ENCODE measurements at regions of chr9 and their contacts with region 1.

Region 1: DNA sequence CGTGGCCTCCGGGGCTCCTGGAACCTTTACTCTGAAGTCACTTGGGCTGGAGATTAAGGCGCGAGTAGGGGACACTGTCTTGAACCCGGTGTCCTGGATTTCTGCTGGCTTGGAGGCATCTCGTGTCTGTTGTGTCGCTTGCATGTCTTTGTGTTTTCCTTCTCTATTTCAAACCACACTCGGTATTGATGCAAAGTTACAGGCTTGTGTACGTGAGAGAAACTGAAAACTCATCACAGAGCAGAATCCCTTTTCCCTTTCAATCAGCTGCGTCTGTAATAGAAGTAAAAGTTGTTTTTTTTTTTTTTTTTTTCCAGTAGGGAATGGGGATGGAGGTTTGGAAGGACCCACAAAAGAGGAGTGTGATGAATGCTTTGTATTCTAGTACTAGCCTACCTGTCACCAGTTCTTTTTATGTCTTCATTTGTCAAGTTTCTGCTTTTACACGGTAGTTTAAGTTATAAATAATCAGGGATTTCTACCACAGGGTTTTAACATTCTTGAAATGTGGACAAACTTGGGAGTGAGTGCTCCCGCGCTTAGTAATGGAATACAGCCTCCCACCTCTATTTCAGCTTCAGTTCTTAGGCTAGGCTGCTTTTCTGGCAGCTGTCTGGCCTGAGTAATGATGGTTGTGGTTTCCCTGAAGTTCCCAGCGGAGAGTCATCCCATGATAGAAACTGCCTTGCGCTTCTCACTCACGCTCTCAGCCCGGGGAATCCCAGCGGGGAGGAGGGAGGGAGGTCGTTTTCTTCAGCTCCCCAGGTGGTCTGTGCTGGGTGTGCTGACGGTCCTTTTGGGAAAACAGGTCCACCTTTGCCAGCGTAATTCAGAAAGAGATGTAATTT is 763 bp downstream of the TJP2 start:
- DNase-seq: no peak
- H3K4me3 Mint-ChIP-seq: peak overlapping the region; percentile 86
- H3K27ac Mint-ChIP-seq: peak overlapping the region; percentile 74
- H3K4me1 Mint-ChIP-seq: peaks cover 64% of the 10 kb centered on the region
- H3K27me3 Mint-ChIP-seq: peaks cover 10% of the 10 kb centered on the region

Region 2: DNA sequence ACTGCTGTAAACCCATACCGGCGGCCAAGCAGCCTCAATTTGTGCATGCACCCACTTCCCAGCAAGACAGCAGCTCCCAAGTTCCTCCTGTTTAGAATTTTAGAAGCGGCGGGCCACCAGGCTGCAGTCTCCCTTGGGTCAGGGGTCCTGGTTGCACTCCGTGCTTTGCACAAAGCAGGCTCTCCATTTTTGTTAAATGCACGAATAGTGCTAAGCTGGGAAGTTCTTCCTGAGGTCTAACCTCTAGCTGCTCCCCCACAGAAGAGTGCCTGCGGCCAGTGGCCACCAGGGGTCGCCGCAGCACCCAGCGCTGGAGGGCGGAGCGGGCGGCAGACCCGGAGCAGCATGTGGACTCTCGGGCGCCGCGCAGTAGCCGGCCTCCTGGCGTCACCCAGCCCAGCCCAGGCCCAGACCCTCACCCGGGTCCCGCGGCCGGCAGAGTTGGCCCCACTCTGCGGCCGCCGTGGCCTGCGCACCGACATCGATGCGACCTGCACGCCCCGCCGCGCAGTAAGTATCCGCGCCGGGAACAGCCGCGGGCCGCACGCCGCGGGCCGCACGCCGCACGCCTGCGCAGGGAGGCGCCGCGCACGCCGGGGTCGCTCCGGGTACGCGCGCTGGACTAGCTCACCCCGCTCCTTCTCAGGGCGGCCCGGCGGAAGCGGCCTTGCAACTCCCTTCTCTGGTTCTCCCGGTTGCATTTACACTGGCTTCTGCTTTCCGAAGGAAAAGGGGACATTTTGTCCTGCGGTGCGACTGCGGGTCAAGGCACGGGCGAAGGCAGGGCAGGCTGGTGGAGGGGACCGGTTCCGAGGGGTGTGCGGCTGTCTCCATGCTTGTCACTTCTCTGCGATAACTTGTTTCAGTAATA is 139.2 kb before region 1 on chr9 and contains the start of gene FXN:
- intact Hi-C with region 1: loop called (anchors 5 kb)
- DNase-seq: peak; percentile 77
- H3K4me3 Mint-ChIP-seq: peak within 1 kb of the TSS; percentile 91
- H3K27ac Mint-ChIP-seq: peak within 1 kb of the TSS; percentile 84
- H3K4me1 Mint-ChIP-seq: peaks cover 25% of the 10 kb centered on the region
- H3K27me3 Mint-ChIP-seq: no peaks in the 10 kb centered on the region
- total RNA-seq, gene FXN: 46.8 and 56.7 TPM in 2 replicates

Region 3: DNA sequence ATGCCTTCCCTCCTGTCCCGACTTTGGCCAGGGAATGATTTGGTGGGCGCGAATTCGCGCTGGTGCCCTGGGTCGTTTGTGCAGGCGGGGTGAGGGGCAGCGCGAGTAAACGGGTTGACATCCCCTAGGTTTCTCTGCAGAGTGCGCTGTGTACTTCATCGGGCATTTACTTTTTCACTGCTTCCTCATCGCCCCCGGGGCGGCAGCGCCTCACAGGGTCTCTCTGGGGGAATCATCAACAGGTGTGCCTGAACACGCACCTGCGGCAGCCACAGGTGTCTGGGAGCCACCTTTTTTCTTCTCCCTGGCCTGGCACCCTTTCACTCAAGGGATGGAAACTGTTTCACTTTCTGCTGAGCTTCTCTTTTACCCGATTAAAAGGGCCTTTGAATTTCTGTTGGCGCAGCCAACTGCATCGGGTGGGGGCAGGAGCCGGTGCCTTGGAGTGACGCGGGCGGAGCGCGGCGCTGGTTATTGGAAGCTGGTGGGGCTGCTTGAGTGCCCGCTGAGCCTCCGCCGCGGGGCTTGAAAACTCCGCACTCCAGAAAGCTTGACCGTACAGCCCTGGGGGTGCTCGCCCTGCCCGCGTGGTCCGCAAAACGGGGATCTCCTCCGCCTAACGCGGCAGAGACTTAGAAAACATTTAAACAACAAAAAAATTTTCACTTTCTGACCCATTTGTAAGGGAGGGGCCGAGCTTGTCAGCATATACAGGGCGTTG is 52.9 kb before region 1 on chr9:
- intact Hi-C with region 1: loop called (anchors 5 kb)
- DNase-seq: peak; percentile 31
- H3K4me3 Mint-ChIP-seq: peak overlapping the region; percentile 84
- H3K27ac Mint-ChIP-seq: no peak overlapping the region
- H3K4me1 Mint-ChIP-seq: peaks cover 8% of the 10 kb centered on the region
- H3K27me3 Mint-ChIP-seq: peaks cover 8% of the 10 kb centered on the region

Region 4: GRCh38 chr9:69750085-69750484 is 575.2 kb after region 1 on chr9:
- intact Hi-C with region 1: loop called (anchors 5 kb)
- DNase-seq: no peak
- H3K4me3 Mint-ChIP-seq: no peak overlapping the region
- H3K27ac Mint-ChIP-seq: no peak overlapping the region
- H3K4me1 Mint-ChIP-seq: peaks cover 47% of the 10 kb centered on the region
- H3K27me3 Mint-ChIP-seq: no peaks in the 10 kb centered on the region